Posterior vena cava (tissue), 2 donors: ENCODE measurements at regions of chr10 and their contacts with region 1.

Region 1: GRCh38 chr10:80535671-80536365 is 1.9 kb upstream of the SH2D4B start:
- DNase-seq: peak; percentile 93

Region 2: GRCh38 chr10:80205478-80206276 is 330.1 kb before region 1 on chr10 and contains the start of gene ANXA11:
- intact Hi-C with region 1: loop called in 1 of 2 experiments (anchors 10 kb)
- DNase-seq: peak; percentile 93
- total RNA-seq, gene ANXA11: 247 to 269 TPM

Region 3: DNA sequence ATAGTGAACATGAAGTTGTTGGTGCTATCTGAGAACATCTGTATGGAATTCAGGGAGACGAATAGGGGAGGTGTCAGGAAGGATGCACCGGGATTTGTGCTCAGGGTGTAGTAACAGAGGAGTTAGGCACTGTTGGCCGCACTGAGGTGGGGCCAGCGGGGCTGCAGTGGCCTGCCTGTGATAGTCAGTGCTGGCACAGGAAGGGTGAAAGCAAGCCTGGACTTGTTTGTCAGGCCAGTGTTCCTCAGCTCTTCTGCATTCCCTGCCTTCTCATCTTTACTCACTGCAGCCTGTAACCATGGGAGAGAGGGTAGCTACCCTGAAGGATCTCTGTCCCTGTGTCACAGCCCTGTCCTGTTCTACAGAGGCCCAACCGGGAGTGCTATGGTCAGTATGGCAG is 83.2 kb after region 1 on chr10:
- intact Hi-C with region 1: no loop called
- DNase-seq: no peak

Region 4: DNA sequence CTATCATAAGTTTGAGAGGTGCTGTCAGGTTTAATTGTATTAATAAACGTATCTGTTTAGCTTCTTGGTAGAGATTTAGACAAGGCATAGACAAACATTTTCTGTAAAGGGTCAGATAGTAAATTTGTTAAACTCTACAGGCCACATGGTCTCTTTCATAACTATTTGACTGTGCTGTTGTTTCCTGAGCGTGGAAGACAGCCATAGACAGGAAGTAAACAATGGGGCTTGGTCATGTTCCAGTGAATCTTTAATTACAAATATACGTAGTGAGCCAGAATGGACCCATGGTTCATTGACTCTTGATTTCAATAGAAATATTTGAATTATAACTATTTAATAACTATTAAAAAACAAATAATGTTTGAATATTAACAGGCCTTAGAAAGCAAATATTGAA is 452.9 kb after region 1 on chr10:
- intact Hi-C with region 1: no loop called
- DNase-seq: no peak